KBM-7 (cell line): ENCODE measurements at regions of chr1 and their contacts with region 1.

Region 1: GRCh38 chr1:182069028-182069466 is 7.5 kb upstream of the ZNF648 start:
- DNase-seq: peak; percentile 61

Region 2: GRCh38 chr1:181479137-181479745 is 589.8 kb before region 1 on chr1:
- in situ Hi-C with region 1: loop called (anchors 25 kb)
- DNase-seq: peak; percentile 47

Region 3: GRCh38 chr1:182259229-182259872 is 190.3 kb after region 1 on chr1:
- in situ Hi-C with region 1: no loop called
- DNase-seq: peak; percentile 97